BJ (cell line): ENCODE measurements at regions of chr15 and their contacts with region 1.

Region 1: DNA sequence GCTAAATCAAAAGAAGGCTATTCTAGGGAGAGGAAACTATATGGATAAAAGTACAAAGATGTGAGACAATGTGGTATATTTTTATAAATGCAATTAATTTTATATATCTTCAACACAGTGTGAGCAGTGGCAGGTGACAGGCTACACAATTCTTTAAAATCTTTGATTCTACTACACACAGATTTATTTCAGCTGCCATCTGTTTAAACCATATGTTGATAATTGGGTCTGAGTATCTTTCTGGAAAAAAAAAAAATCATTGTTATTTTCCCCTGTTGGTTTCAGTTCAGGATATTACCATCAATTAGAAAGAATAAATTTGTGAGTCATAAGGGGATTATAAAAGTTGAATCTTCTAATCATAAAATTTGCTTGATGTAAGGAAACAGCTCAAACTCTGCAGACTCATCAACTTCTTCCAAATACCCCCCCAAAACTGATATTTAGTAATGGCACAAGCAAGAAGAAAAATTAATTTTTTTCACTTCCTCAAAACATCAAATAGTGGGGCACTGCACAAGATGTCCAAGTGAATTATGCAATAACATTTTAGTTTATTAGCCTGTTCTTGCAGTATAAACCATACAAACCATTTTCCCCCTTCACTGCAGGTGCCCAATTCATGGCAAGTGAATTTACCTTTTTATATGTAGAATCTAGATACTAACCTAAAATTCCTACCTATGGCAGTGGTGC is 12.0 kb downstream of the PIERCE2 start:
- DNase-seq: no peak
- H3K4me3 ChIP-seq: no peak overlapping the region
- H3K27me3 ChIP-seq: no peaks in the 10 kb centered on the region
- CTCF ChIP-seq: no peak

Region 2: DNA sequence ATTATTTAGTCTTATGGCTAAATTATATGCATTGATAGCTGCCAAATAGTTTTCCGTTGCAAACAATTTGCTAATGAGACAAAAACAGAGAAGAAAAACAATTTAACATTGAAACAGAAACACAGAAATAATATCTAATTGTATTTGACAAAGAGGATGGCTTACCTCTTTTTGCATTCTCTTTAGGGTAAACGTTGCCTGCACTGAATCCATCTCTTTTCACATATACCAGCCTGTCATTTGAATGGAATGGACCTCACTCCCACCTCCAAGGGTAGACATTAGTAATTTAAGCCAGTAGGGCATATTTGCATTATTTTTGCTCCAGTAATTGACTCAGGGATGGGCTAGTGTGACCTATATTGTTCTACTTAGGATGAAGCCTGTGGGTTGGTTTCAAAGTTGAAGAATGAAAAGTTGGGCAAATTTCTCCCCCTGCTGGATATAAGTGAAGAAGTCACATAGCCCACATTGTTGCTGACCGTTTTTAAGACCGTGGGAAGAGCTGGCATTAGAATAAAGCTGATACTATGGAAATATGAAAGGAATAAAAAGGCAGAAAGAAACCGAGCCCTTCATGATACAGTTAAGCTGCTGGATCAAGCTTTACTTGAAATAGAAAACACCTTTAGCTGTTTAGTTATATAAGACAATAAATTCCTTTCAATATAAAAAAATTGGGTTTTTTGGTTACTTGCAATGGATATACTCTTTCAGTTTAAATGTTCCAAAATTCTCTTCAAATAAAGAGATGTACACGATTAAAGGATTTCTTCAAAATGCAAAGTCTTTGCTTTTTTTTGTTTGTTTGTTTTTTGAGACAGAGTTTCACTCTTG is 14.9 kb after region 1 on chr15:
- CTCF ChIA-PET with region 1: interaction called, 29 read pairs
- POLR2A ChIA-PET with region 1: no interaction called
- DNase-seq: no peak
- H3K4me3 ChIP-seq: no peak overlapping the region
- H3K27me3 ChIP-seq: no peaks in the 10 kb centered on the region
- CTCF ChIP-seq: peak; percentile 68

Region 3: DNA sequence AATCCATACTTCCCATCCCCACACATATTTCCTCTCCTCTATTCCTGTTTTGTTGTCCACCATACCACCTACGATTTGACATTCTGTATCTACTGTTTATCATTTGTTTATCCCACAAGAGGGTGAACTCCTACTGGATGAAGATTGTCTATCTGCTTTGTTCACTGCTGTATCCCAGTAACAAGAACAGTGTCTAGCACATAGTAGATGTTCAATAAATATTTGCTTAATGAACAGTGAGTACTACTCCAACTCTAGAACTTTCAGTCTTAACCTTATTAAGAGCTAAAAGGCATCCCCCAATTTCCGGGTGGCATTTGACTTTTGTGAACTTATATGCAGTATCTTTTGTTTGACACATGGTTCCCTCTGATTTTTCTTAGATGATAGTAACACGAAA is 166.5 kb after region 1 on chr15:
- CTCF ChIA-PET with region 1: no interaction called
- POLR2A ChIA-PET with region 1: no interaction called
- DNase-seq: no peak
- H3K4me3 ChIP-seq: peak overlapping the region; percentile 74
- H3K27me3 ChIP-seq: no peaks in the 10 kb centered on the region
- CTCF ChIP-seq: no peak